AG04449 (cell line): ENCODE measurements at regions of chr12 and their contacts with region 1.

Region 1: GRCh38 chr12:122399592-122400373 is 22.7 kb downstream of the CLIP1 start:
- DNase-seq: peak; percentile 79
- H3K4me3 ChIP-seq: no peak overlapping the region
- CTCF ChIP-seq: peak; percentile 50

Region 2: GRCh38 chr12:122389697-122390096 is 10.1 kb before region 1 on chr12:
- CTCF ChIA-PET with region 1: interaction called, 22 read pairs
- POLR2A ChIA-PET with region 1: no interaction called
- DNase-seq: no peak
- H3K4me3 ChIP-seq: no peak overlapping the region
- CTCF ChIP-seq: no peak

Region 3: DNA sequence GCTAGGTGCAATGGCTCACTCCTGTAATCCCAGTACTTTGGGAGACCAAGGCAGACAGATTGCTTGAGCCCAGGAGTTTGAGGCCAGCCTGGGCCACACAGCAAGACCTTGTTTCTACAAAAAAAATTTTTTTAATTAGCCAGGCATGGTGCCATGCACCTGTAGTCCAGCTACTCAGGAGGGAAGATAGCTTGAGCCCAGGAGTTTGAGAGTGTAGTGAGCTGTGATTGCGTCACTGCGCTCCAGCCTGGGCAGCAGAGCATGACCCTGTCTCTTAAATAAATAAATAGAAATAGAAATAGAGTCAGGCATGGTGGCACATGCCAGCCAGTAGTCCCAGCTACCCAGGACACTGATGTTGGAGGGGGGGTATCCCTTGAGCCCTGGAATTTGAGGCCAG is 59.4 kb after region 1 on chr12:
- CTCF ChIA-PET with region 1: interaction called, 13 read pairs
- POLR2A ChIA-PET with region 1: interaction called, 6 read pairs
- DNase-seq: no peak
- H3K4me3 ChIP-seq: no peak overlapping the region
- CTCF ChIP-seq: no peak

Region 4: DNA sequence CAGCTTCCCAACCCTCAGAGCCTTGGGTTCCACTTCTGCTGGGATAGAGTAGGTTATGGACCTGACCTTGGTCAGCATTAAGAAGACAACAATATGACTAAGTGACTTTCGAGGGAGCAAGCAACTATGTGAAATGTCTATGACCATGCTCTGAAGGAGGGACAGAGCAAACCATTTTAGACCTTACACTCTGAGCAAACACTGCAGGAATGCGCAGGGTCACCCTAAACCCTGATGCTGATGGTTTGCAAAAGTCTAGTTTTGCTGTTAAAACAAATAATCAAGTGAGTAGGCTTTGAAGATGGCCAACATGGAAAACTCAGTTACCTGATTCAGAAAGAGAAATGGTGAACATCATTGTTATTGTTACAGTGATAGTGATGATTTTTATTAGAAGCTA is 92.2 kb after region 1 on chr12:
- CTCF ChIA-PET with region 1: interaction called, 51 read pairs
- POLR2A ChIA-PET with region 1: interaction called, 3 read pairs
- DNase-seq: no peak
- H3K4me3 ChIP-seq: no peak overlapping the region
- CTCF ChIP-seq: no peak

Region 5: GRCh38 chr12:122571821-122572220 is 172.0 kb after region 1 on chr12:
- CTCF ChIA-PET with region 1: no interaction called
- POLR2A ChIA-PET with region 1: no interaction called
- DNase-seq: no peak
- H3K4me3 ChIP-seq: no peak overlapping the region
- CTCF ChIP-seq: no peak